Left colon (tissue), 2 donors: ENCODE measurements at regions of chr15 and their contacts with region 1.

Region 1: GRCh38 chr15:60195611-60196010 is 191.5 kb downstream of the FOXB1 start:
- DNase-seq: no peak
- ATAC-seq: no peak

Region 2: DNA sequence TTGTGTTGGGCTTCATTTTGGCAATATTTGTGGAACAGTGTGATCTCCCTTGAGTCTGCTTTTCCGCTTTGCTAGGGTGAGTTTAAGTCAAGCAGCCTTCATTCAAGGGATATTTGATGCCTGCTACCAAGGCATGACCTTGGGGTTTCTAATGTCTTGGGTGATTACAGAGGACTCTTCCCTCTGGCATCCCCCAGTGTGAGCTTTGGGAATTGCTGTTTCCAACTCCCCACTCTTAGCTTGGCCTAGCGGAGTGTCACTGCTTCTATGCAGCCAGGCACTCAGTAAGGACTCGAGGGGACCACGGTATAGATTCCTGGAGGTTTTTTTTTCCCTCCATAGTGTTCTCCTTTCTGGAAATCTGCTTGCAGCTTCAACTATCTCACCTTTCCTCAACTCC is 562.9 kb before region 1 on chr15:
- intact Hi-C with region 1: loop called in 1 of 2 experiments (anchors 10 kb)
- DNase-seq: no peak
- ATAC-seq: peak; percentile 22

Region 3: GRCh38 chr15:60672400-60672799 is 476.8 kb after region 1 on chr15:
- intact Hi-C with region 1: no loop called
- DNase-seq: no peak
- ATAC-seq: no peak